CD8-positive, alpha-beta T cell (primary cell): ENCODE measurements at regions of chr1 and their contacts with region 1.

Region 1: GRCh38 chr1:31065310-31066217 is at the start of gene PUM1:
- DNase-seq: peak; percentile 97 to 99 (median 98)
- ATAC-seq: peak; percentile 97
- H3K4me3 ChIP-seq: peak within 1 kb of the TSS; percentile 79
- H3K4me3 Mint-ChIP-seq: peak within 1 kb of the TSS; percentile 97
- H3K27ac ChIP-seq: peak within 1 kb of the TSS; percentile 83 to 94
- H3K27ac Mint-ChIP-seq: peak within 1 kb of the TSS; percentile 99
- H3K4me1 ChIP-seq: peaks cover 28% of the 10 kb centered on the region
- H3K4me1 Mint-ChIP-seq: peaks cover 27% of the 10 kb centered on the region
- H3K27me3 ChIP-seq: no peaks in the 10 kb centered on the region
- H3K27me3 Mint-ChIP-seq: no peaks in the 10 kb centered on the region
- CTCF ChIP-seq: no peak
- total RNA-seq, gene PUM1: 190 to 191 TPM

Region 2: DNA sequence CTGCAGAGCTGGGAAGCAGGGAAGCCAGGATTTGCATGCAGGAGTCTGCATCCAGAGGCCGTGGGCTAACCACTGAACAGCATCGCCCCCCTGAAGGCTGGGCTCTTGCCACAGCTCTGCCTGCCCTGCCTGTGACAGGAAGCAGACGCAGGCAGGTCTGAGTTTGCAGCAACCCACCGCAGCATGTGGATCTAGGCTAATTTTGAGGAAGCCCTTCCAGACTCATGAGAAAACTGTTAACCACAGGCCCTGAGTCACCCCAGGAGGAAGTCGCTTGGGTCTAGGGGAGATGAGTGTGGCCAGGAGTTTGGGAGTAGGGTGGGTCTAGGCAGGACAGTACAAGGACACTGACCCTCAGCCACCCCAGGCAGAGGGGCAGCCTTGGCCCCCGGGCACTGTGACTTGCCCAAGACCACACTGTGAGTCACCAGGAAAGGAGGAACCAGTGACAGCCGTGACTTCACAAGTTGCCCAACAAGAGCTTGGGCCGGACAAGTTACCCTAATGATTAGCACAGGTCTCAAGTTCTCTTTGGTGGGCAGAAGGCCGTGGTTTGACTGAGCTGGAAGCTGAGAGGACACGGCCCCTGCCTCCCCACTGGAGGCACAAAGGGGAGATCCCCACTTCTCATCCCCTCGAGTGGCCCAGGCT is 308.9 kb before region 1 on chr1:
- CTCF ChIA-PET with region 1: no interaction called
- POLR2A ChIA-PET with region 1: no interaction called
- intact Hi-C with region 1: loop called in 1 of 2 experiments (anchors 10 kb)
- DNase-seq: peak; percentile 52 to 92 (median 80)
- ATAC-seq: peak; percentile 59
- H3K4me3 ChIP-seq: peak overlapping the region; percentile 70 to 87
- H3K4me3 Mint-ChIP-seq: peak overlapping the region; percentile 97
- H3K27ac ChIP-seq: peak overlapping the region; percentile 78 to 92
- H3K27ac Mint-ChIP-seq: peak overlapping the region; percentile 99
- H3K4me1 ChIP-seq: peaks cover 72% of the 10 kb centered on the region
- H3K4me1 Mint-ChIP-seq: peaks cover 86% of the 10 kb centered on the region
- H3K27me3 ChIP-seq: no peaks in the 10 kb centered on the region
- H3K27me3 Mint-ChIP-seq: no peaks in the 10 kb centered on the region
- CTCF ChIP-seq: no peak

Region 3: DNA sequence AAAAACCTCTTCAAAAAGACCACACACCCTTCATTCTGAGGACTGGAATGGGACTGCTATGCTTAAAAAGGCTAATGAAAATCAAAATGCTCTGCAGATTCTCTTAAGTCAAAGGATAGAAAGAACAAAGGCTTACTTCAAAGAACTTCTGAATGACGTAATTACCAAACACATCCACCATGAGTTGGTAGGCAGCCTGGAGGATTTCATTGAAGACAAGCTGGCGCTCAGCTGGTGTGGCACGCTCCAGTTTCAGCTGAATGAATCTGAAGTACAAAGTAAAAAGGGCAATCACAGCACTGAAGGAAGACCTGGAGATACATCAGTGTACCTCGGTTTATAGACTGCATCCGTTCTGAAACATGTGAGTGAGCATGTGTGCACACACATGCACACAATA is 113.5 kb before region 1 on chr1:
- CTCF ChIA-PET with region 1: no interaction called
- POLR2A ChIA-PET with region 1: no interaction called
- intact Hi-C with region 1: loop called in 1 of 2 experiments (anchors 5 kb)
- DNase-seq: peak in 3 of 9 experiments; percentile 16 to 56 (median 19)
- ATAC-seq: peak; percentile 63
- H3K4me3 ChIP-seq: no peak overlapping the region
- H3K4me3 Mint-ChIP-seq: no peak overlapping the region
- H3K27ac ChIP-seq: no peak overlapping the region
- H3K27ac Mint-ChIP-seq: peak overlapping the region; percentile 52
- H3K4me1 ChIP-seq: no peaks in the 10 kb centered on the region
- H3K4me1 Mint-ChIP-seq: peaks cover 30% of the 10 kb centered on the region
- H3K27me3 ChIP-seq: no peaks in the 10 kb centered on the region
- H3K27me3 Mint-ChIP-seq: no peaks in the 10 kb centered on the region
- CTCF ChIP-seq: no peak

Region 4: GRCh38 chr1:30966690-30967369 is 98.7 kb before region 1 on chr1:
- CTCF ChIA-PET with region 1: no interaction called
- POLR2A ChIA-PET with region 1: no interaction called
- intact Hi-C with region 1: loop called in 1 of 2 experiments (anchors 10 kb)
- DNase-seq: no peak
- ATAC-seq: no peak
- H3K4me3 ChIP-seq: no peak overlapping the region
- H3K4me3 Mint-ChIP-seq: no peak overlapping the region
- H3K27ac ChIP-seq: no peak overlapping the region
- H3K27ac Mint-ChIP-seq: no peak overlapping the region
- H3K4me1 ChIP-seq: no peaks in the 10 kb centered on the region
- H3K4me1 Mint-ChIP-seq: peaks cover 22% of the 10 kb centered on the region
- H3K27me3 ChIP-seq: no peaks in the 10 kb centered on the region
- H3K27me3 Mint-ChIP-seq: no peaks in the 10 kb centered on the region
- CTCF ChIP-seq: no peak

Region 5: DNA sequence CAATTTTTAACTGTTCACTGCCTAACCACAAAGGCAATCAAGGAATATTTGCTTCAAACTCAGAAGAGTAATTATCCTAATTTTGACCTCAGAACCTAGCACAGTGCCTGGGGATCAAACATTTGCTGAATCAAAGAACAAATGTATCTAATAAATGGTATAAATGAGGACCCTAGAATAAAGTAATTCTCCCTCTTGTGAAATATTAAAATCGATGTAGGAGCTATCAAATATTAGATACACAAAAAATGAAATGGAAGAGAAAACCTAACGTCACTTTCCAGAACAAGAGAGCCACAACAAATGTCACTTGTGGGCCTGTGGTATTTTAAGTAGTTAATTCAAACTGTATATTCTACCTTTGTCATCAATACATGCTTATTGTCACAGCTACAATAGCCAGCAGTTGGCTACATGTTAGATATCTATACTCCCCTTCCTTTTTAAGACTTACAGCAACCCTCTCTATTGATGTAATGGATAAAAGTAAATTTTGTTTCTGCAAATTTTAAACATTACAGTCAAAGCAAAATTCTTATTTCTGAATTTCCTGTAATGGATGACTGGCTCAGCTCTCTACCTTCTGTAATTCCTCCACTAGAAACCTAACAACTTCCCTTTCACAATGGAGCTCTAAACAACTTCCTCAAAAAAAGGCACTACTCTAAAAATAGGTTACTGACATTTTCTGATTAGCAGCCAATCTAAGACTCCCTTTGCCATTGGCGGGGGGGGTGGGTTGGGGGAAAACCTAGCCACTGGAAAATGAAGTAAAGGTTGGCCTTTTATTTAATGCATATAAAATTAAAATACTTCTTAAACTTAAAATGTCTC is 37.7 kb before region 1 on chr1:
- CTCF ChIA-PET with region 1: no interaction called
- POLR2A ChIA-PET with region 1: no interaction called
- intact Hi-C with region 1: loop called in 1 of 2 experiments (anchors 5 kb)
- DNase-seq: no peak
- ATAC-seq: no peak
- H3K4me3 ChIP-seq: no peak overlapping the region
- H3K4me3 Mint-ChIP-seq: no peak overlapping the region
- H3K27ac ChIP-seq: no peak overlapping the region
- H3K27ac Mint-ChIP-seq: peak overlapping the region; percentile 45
- H3K4me1 ChIP-seq: peaks cover 25% of the 10 kb centered on the region
- H3K4me1 Mint-ChIP-seq: peaks cover 76% of the 10 kb centered on the region
- H3K27me3 ChIP-seq: no peaks in the 10 kb centered on the region
- H3K27me3 Mint-ChIP-seq: no peaks in the 10 kb centered on the region
- CTCF ChIP-seq: no peak

Region 6: GRCh38 chr1:31111290-31111977 is 45.9 kb after region 1 on chr1:
- CTCF ChIA-PET with region 1: no interaction called
- POLR2A ChIA-PET with region 1: no interaction called
- intact Hi-C with region 1: no loop called
- DNase-seq: no peak
- ATAC-seq: no peak
- H3K4me3 ChIP-seq: no peak overlapping the region
- H3K4me3 Mint-ChIP-seq: no peak overlapping the region
- H3K27ac ChIP-seq: no peak overlapping the region
- H3K27ac Mint-ChIP-seq: no peak overlapping the region
- H3K4me1 ChIP-seq: no peaks in the 10 kb centered on the region
- H3K4me1 Mint-ChIP-seq: no peaks in the 10 kb centered on the region
- H3K27me3 ChIP-seq: no peaks in the 10 kb centered on the region
- H3K27me3 Mint-ChIP-seq: peaks cover 14% of the 10 kb centered on the region
- CTCF ChIP-seq: no peak

Region 7: DNA sequence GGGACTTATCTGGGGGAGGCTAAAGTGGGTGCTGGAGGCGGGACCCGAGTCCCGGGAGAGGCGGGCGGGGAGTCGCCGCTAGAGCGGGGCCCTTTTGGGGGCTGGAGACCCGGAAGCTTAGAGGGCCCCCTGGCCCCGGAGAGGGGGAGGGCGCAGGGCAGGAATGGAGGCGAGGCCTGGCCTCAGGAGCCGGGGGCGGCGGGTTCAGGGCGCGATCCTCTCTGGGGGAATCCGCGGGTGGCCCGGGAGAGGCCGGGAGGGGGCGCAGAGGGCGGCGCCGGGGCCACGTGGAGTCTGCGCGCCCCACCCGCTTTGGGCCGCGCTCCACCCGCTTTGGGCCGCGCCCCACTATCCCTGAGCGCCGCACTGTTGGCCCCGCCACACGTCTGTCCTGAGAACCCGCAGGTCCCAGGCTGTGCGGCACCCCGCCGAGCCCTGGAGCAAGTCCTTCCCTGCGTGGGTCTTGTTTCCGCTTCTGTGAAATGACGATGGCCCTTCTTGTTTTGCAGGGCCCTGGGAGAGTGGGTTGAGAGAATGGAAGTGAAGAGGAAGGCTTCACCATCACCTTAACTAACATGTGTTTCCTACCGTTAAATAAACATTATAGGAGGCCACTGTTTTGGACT is 89.8 kb after region 1 on chr1:
- CTCF ChIA-PET with region 1: no interaction called
- POLR2A ChIA-PET with region 1: no interaction called
- intact Hi-C with region 1: loop called in 1 of 2 experiments (anchors 1 kb)
- DNase-seq: peak; percentile 4 to 73 (median 45)
- ATAC-seq: peak; percentile 78
- H3K4me3 ChIP-seq: peak overlapping the region; percentile 49 to 60
- H3K4me3 Mint-ChIP-seq: peak overlapping the region; percentile 87
- H3K27ac ChIP-seq: no peak overlapping the region
- H3K27ac Mint-ChIP-seq: peak overlapping the region; percentile 74
- H3K4me1 ChIP-seq: peaks cover 9% of the 10 kb centered on the region
- H3K4me1 Mint-ChIP-seq: peaks cover 10% of the 10 kb centered on the region
- H3K27me3 ChIP-seq: no peaks in the 10 kb centered on the region
- H3K27me3 Mint-ChIP-seq: no peaks in the 10 kb centered on the region
- CTCF ChIP-seq: no peak

Region 8: DNA sequence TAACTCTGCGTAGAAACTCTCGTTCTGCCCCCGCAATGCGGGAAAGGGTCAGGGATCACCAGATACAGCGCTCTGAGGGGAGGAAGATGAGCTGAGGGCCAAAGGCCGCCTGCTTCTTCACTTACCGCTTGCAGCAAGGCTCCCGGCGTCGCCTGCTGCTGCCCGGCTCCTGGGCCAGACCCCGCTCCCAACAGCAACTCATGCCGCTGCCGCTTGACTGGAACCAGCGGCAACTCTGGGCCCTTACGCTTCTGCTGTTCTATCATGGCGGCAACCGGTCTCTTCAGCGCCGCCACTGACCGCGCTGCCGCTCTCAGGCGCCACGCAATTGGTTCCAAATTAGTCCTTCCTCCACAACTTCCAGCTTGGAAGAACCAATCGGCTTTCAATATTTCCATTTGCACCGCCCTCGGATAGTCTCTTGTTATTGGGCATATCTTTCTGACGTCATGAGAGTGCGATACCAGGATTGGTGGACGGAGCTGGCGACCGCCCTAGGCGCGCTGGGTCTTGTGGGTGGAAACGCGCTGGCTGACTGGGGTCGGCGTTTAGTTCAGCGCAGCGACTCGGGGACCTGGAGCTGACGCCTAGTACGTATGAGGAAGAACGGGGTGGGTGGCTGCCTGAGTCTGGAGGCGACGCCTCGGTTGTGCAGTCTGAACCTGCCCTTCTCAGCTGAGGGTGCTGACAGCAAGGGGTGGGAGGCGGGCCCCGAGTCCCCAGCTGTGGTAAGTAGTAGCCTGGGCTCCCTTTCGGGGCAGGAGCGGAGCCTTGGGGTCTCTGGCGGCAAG is 231.1 kb after region 1 on chr1 and contains the starts of genes SNRNP40 and ZCCHC17:
- CTCF ChIA-PET with region 1: no interaction called
- POLR2A ChIA-PET with region 1: no interaction called
- intact Hi-C with region 1: loop called (anchors 1 to 2 kb)
- DNase-seq: peak; percentile 85 to 99 (median 91)
- ATAC-seq: peak; percentile 90
- H3K4me3 ChIP-seq: peak within 1 kb of the TSS; percentile 67 to 83
- H3K4me3 Mint-ChIP-seq: no peak within 1 kb of the TSS
- H3K27ac ChIP-seq: peak within 1 kb of the TSS; percentile 90 to 92
- H3K27ac Mint-ChIP-seq: no peak within 1 kb of the TSS
- H3K4me1 ChIP-seq: peaks cover 31% of the 10 kb centered on the region
- H3K4me1 Mint-ChIP-seq: peaks cover 35% of the 10 kb centered on the region
- H3K27me3 ChIP-seq: no peaks in the 10 kb centered on the region
- H3K27me3 Mint-ChIP-seq: no peaks in the 10 kb centered on the region
- CTCF ChIP-seq: no peak
- total RNA-seq, gene SNRNP40: 78.3 to 81.9 TPM
- total RNA-seq, gene ZCCHC17: 7.2 to 8.0 TPM